ENCODE measurements at regions of chr4 and their contacts with region 1.

Region 1: DNA sequence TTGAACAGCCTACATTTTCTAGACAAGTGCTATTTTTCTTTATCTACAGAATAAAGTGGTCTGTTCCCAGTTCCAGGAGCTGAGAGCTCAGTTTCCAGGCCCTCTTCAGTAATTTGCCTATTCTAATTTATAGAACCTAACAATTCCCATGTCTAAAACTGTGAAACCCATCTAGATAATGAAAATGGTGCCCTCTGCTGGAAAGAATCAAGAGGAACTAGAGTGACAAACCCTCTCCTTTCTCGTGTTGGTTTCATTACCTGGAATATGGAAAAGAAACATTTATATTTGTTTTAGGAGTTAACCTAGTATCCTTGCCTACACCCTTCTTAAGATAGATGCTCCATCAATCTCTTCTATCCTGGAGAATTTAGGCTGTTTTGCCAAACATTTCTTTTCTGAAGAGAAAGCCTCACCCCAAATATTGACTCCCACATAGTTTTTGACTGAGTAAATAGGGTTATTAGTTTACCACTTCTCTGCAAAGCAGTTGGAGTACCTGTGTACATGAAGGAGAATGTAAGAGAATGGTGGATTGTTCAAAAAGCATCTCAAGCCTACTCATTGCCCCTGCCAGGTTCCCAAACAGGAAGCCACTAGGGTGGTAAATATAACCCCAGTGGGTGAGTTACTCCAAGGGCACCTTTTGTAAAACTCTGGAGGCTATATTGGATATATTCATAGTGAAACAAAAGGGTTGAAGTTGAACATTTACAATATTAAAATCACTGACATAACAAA is 121.6 kb downstream of the RASL11B start:
- DNase-seq: no peak
- H3K4me3 ChIP-seq: no peak overlapping the region
- H3K27ac ChIP-seq: no peak overlapping the region
- H3K4me1 ChIP-seq: peaks cover 14% of the 10 kb centered on the region
- H3K27me3 ChIP-seq: no peaks in the 10 kb centered on the region
- CTCF ChIP-seq: peak in 2 of 3 experiments; percentile 39 to 65
- POLR2A ChIP-seq: no peak

Region 2: GRCh38 chr4:51960486-51960885 is 1023.2 kb before region 1 on chr4:
- intact Hi-C with region 1: no loop called
- DNase-seq: no peak
- H3K4me3 ChIP-seq: no peak overlapping the region
- H3K27ac ChIP-seq: no peak overlapping the region
- H3K4me1 ChIP-seq: no peaks in the 10 kb centered on the region
- H3K27me3 ChIP-seq: no peaks in the 10 kb centered on the region
- CTCF ChIP-seq: no peak
- POLR2A ChIP-seq: no peak

Region 3: DNA sequence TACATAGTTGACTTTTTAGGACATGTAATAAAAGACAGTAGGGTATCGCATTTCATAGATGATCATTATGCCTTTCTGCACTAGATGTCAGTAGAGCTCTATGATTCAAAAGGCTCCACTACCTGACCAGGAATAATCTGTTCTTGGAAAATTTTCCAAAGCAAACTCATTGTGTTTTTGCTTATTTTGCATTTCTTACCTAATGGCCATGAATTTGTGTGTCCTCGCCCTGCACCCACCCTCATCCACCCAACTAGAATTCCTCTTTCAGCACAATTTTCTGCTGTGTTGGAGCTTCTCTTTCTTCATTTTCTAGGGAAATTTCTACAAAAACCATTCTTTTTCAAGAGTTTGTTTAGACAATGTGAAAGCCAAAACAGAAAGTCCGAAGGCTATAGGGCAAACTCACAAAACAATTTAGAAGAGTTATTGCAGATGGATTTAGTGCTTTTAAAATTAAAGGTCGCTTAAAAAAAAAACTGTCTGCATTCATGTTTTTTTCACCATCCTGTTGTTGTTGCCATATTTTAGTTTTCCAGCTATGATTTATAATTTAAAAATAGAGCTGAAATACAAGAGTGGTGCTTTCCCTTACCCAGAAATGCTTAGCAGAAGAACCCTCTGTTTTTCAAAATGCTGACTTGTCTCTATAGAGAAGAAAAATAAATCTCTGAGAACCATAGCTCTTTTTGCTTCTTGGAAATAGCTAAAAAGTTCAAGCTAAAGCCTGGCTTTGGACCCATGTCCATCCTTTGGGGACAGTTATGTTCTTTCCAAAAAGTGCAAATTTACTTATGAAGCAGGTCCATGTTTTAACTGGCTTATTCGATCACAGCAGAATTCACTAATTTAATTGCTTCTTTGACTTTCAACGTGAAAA is 748.9 kb before region 1 on chr4:
- intact Hi-C with region 1: loop called (anchors 10 kb)
- DNase-seq: no peak
- H3K4me3 ChIP-seq: no peak overlapping the region
- H3K27ac ChIP-seq: no peak overlapping the region
- H3K4me1 ChIP-seq: no peaks in the 10 kb centered on the region
- H3K27me3 ChIP-seq: no peaks in the 10 kb centered on the region
- CTCF ChIP-seq: peak in 2 of 3 experiments; percentile 28 to 41
- POLR2A ChIP-seq: no peak

Region 4: GRCh38 chr4:52545099-52546069 is 438.3 kb before region 1 on chr4:
- intact Hi-C with region 1: loop called (anchors 5 kb)
- DNase-seq: no peak
- H3K4me3 ChIP-seq: no peak overlapping the region
- H3K27ac ChIP-seq: no peak overlapping the region
- H3K4me1 ChIP-seq: no peaks in the 10 kb centered on the region
- H3K27me3 ChIP-seq: no peaks in the 10 kb centered on the region
- CTCF ChIP-seq: peak; percentile 15 to 78 (median 75)
- POLR2A ChIP-seq: no peak

Region 5: DNA sequence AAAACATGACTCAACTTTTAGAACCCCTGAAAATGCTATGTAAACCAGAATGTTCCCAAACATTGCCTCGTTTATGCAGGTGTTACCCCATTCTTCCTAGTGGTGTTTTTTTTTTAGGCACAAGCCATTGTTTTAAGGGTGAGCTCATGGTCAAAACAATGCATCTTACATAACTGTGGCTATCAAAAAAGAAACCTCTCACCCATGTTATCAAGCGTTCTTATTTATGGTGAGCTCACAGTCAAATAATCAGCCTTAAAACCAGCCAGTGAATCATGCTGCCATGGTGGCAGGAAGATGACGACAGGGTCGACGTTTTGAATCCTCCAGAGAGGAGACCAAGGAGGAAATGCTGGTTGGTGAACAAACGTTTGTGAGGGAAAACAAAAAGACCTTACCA is 1946.5 kb after region 1 on chr4:
- intact Hi-C with region 1: no loop called
- DNase-seq: no peak
- H3K4me3 ChIP-seq: no peak overlapping the region
- H3K27ac ChIP-seq: no peak overlapping the region
- H3K4me1 ChIP-seq: peaks cover 14% of the 10 kb centered on the region
- H3K27me3 ChIP-seq: no peaks in the 10 kb centered on the region
- CTCF ChIP-seq: no peak
- POLR2A ChIP-seq: no peak

Measured in vagina (tissue), 2 donors.